Right ventricle myocardium inferior (tissue), 1 donor: ENCODE measurements at regions of chr11 and their contacts with region 1.

Region 1: DNA sequence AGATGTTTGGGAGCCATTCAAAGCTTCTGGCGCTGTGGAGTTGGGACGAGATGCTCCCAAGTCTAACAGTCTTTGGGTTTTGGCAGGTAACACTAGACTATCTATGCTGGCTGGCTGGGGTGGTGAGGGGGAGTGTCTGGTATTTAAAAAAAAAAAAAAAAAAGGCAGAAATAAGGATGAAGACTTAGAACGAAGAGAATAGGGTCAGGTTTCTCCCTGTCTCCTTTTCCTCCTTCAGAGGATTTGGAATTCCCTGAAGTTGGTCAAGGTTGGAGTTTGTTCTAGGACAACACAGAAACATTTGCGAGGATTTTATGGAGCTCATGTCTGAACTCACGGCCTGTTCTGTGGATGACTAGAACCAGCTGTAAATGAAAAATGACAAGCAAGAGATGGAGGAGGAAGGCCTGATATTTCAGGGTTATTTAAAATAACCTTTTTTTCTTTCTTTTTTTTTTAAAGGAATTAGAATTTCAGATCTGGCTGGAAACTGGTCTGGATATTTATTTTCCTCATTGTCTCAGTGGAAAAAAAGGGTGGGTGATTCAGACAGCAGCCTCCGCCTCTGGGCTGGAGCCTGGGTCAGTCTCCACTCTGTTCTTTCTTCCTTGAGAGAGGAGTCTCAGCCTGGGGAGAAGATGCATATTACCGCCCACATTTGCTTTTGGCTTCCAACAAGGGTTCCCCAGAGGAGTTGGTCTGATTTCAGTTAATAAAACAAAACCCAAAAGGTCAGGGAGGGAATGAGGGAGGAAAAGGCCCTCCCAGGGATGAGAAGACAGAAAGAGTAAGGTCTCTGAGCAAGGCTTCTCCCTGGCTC is 80.1 kb downstream of the USP35 start:
- DNase-seq: no peak
- ATAC-seq: peak; percentile 96

Region 2: GRCh38 chr11:78202733-78203167 is 66.1 kb before region 1 on chr11:
- intact Hi-C with region 1: no loop called
- DNase-seq: no peak
- ATAC-seq: no peak

Region 3: GRCh38 chr11:78310500-78310909 is 41.7 kb after region 1 on chr11:
- intact Hi-C with region 1: loop called (anchors 5 kb)
- DNase-seq: peak; percentile 76
- ATAC-seq: peak; percentile 86